ENCODE measurements at regions of chr5 and their contacts with region 1.

Region 1: DNA sequence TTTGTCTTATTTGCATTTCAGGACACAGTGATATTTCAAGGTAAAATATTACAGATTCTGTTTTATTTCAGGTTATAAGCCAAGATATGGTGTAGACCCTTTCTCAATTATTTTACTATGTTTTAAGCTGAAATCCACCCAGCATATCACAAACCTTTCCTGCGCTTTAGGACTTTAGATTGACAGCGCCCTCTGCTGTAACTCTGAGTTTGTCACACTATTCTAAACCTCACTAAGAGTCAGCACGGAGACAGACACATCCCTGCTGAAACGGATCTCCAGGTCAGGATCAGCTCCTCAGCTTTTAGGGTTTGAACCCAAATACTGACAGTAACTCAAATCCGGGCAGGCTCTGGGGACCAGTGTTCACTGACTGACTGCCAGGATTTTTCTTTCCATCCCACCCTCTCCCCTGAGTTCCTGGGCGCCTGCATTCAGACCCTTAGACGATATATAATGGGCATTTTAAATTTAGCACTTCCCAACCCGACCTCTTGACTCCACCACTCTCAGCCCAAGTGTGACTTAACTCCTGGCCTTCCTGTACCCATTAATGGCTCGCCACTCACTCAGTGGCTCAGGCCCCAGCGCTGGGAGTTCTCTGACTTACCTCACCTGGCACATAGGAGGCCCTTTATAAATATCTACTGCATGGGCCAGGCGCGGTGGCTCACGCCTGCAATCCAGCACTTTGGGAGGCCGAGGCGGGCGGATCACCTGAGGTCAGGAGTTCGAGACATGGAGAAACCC is 33.5 kb downstream of the TLX3 start:
- DNase-seq: peak; percentile 79

Region 2: DNA sequence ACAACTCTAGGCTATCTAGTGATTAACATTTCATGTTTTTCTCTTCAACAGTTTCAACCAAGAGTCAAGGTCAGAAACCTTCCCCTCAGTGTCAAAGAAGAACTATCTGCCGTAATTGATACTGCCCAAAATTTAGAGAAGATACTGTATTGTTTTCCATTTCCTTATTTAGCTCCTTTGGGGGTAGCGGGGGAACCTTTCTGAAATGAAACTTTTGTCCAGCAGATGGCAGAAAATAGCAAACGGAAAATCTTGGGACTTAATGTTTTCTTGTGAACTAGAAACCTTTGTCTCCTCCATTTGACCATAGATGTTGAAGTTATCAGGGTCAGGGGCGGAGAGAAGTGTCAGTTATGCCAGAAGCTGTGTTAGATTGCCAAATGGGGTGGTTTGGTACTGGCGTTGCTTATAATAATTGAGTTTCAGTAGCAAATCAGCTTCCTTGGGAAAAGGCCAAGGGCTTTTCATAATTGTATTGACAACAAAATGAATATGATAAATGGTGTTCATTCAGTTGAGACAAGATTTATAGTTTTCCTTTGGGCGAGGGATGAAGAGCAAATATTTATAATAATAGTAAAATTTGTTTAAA is 135.2 kb before region 1 on chr5:
- CTCF ChIA-PET with region 1: interaction called, 39 read pairs
- POLR2A ChIA-PET with region 1: no interaction called
- DNase-seq: peak; percentile 63

Region 3: GRCh38 chr5:171387345-171387969 is 44.9 kb after region 1 on chr5 and contains the start of gene NPM1:
- CTCF ChIA-PET with region 1: no interaction called
- POLR2A ChIA-PET with region 1: no interaction called
- DNase-seq: peak; percentile 100